Activated naive CD4-positive, alpha-beta T cell treated with anti-CD3 and anti-CD28 coated beads for 36 hours (primary cell): ENCODE measurements at regions of chr14 and their contacts with region 1.

Region 1: GRCh38 chr14:21014761-21015190 is 10.1 kb downstream of the NDRG2 start:
- DNase-seq: peak; percentile 91
- H3K4me3 Mint-ChIP-seq: no peak overlapping the region
- H3K27ac Mint-ChIP-seq: no peak overlapping the region
- H3K4me1 Mint-ChIP-seq: no peaks in the 10 kb centered on the region
- H3K27me3 Mint-ChIP-seq: peaks cover 5% of the 10 kb centered on the region

Region 2: GRCh38 chr14:20989572-20990551 is 24.9 kb before region 1 on chr14 and contains the start of gene METTL17:
- CTCF ChIA-PET with region 1: interaction called, 95 read pairs
- intact Hi-C with region 1: no loop called
- DNase-seq: peak; percentile 94
- H3K4me3 Mint-ChIP-seq: peak within 1 kb of the TSS; percentile 86
- H3K27ac Mint-ChIP-seq: peak within 1 kb of the TSS; percentile 86
- H3K4me1 Mint-ChIP-seq: peaks cover 19% of the 10 kb centered on the region
- H3K27me3 Mint-ChIP-seq: no peaks in the 10 kb centered on the region
- total RNA-seq, gene METTL17: 90.9 to 97.5 TPM

Region 3: GRCh38 chr14:21024585-21025370 is 10.0 kb after region 1 on chr14 and contains the start of gene NDRG2:
- CTCF ChIA-PET with region 1: interaction called, 68 read pairs
- intact Hi-C with region 1: no loop called
- DNase-seq: peak; percentile 68
- H3K4me3 Mint-ChIP-seq: peak within 1 kb of the TSS; percentile 72
- H3K27ac Mint-ChIP-seq: no peak within 1 kb of the TSS
- H3K4me1 Mint-ChIP-seq: peaks cover 10% of the 10 kb centered on the region
- H3K27me3 Mint-ChIP-seq: no peaks in the 10 kb centered on the region
- total RNA-seq, gene NDRG2: 8.4 to 8.8 TPM

Region 4: GRCh38 chr14:21049271-21049673 is 34.5 kb after region 1 on chr14:
- CTCF ChIA-PET with region 1: interaction called, 147 read pairs
- intact Hi-C with region 1: no loop called
- DNase-seq: no peak
- H3K4me3 Mint-ChIP-seq: no peak overlapping the region
- H3K27ac Mint-ChIP-seq: no peak overlapping the region
- H3K4me1 Mint-ChIP-seq: peaks cover 6% of the 10 kb centered on the region
- H3K27me3 Mint-ChIP-seq: no peaks in the 10 kb centered on the region

Region 5: GRCh38 chr14:21071225-21072030 is 56.7 kb after region 1 on chr14:
- CTCF ChIA-PET with region 1: interaction called, 40 read pairs
- intact Hi-C with region 1: loop called (anchors 1 kb)
- DNase-seq: peak; percentile 84
- H3K4me3 Mint-ChIP-seq: peak overlapping the region; percentile 65
- H3K27ac Mint-ChIP-seq: no peak overlapping the region
- H3K4me1 Mint-ChIP-seq: peaks cover 29% of the 10 kb centered on the region
- H3K27me3 Mint-ChIP-seq: peaks cover 55% of the 10 kb centered on the region

Region 6: DNA sequence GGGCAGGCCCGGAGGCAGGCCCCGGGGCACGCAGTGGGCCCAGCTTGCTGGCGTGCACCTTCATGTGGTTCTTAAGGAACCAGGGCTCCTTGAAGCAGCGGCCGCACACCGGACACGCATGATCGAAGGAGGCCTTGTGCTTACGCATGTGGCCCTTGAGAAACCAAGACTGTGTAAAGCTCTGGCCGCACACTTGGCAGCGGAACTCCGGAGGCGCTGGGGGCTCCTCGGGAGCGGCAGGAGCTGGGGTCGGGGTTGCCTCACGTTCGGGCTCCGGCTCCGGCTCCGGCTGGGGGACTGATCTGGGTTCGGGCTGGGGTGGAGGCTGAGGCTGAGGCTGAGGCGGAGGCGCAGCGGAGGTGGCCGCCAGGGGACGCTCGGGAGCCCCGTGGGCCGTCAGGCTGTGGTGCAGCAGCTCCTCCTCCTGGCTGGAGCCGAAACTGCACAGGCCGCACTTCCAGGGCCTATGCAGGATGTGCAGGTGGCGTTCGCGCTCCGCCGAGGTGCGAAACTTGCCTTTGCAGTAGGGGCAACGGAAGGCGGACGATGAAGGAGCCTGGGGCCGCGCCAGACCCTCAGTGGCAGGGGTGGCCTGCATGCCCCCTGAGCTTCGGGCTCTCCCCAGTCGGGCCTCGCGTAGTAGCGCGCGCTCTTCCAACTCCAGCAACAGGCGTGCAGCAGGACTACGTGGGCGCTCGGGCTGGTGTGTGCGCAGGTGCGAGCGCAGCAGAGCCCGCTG is 77.7 kb after region 1 on chr14:
- CTCF ChIA-PET with region 1: interaction called, 163 read pairs
- intact Hi-C with region 1: loop called (anchors 1 kb)
- DNase-seq: peak; percentile 93
- H3K4me3 Mint-ChIP-seq: no peak overlapping the region
- H3K27ac Mint-ChIP-seq: no peak overlapping the region
- H3K4me1 Mint-ChIP-seq: peaks cover 13% of the 10 kb centered on the region
- H3K27me3 Mint-ChIP-seq: no peaks in the 10 kb centered on the region

Region 7: GRCh38 chr14:21203470-21204166 is 188.8 kb after region 1 on chr14:
- CTCF ChIA-PET with region 1: no interaction called
- intact Hi-C with region 1: no loop called
- DNase-seq: no peak
- H3K4me3 Mint-ChIP-seq: no peak overlapping the region
- H3K27ac Mint-ChIP-seq: peak overlapping the region; percentile 22
- H3K4me1 Mint-ChIP-seq: peaks cover 10% of the 10 kb centered on the region
- H3K27me3 Mint-ChIP-seq: no peaks in the 10 kb centered on the region